K562 (cell line): ENCODE measurements at regions of chr2 and their contacts with region 1.

Region 1: DNA sequence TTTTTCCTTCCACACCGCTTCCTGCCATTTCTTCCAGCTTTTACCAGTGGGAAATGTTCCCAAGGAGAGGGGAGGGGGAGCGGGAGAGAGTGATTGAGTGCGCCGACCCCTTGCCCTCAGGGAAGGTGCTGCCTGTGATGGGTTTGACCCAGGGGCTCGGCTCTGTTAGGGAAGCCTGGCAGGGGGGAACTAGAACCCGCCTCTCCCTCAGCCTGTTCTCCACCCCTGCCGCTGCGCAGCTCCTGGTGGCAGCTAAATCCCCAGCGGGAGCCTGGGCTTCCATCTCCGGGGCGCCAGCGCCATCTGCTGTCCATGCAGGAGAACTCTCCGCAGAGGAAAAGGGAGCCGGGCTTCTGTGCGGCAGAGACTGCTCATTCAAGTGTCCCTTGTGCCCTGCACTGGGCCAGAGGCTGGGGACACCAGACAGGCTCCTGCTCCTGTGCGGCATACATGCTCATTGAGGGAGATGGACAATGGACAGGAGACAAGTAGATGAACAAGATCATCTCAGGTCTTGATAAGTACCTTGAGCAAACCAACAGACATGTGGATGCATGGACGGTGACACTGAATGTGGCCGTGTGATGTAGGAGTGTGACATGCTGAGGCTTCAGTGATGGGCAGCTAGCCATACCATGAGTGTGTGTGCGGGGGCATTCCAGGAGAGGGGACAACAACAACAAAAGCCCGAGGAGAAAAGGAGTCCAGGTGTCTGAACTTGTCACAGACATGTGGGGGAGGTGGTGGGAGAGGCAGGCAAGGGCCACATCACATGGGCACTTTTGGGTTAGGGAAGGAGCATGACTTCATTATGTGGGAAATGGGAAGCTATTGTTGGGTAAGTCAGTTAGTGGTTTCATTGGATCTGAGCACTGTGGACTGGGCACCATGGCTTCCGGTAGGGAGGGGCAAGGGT is 13.3 kb downstream of the CHPF start:
- DNase-seq: peak; percentile 74 to 88 (median 82)
- ATAC-seq: peak; percentile 80
- H3K4me3 ChIP-seq: no peak overlapping the region
- H3K27ac ChIP-seq: no peak overlapping the region
- H3K4me1 ChIP-seq: peaks cover 47 to 61% of the 10 kb centered on the region in 2 experiments
- H3K27me3 ChIP-seq: no peaks in the 10 kb centered on the region
- CTCF ChIP-seq: peak; percentile 91 to 98 (median 97)
- EP300 ChIP-seq: no peak
- POLR2A ChIP-seq: no peak
- RAD21 ChIP-seq: peak; percentile 98 to 99

Region 2: GRCh38 chr2:219402665-219403515 is 127.4 kb before region 1 on chr2:
- CTCF ChIA-PET with region 1: interaction called, 25 read pairs
- POLR2A ChIA-PET with region 1: interaction called, 3 read pairs
- in situ Hi-C with region 1: loop called (anchors 5 kb)
- intact Hi-C with region 1: loop called (anchors 1 kb)
- DNase-seq: peak; percentile 68 to 81 (median 72)
- ATAC-seq: peak; percentile 83
- H3K4me3 ChIP-seq: no peak overlapping the region
- H3K27ac ChIP-seq: no peak overlapping the region
- H3K4me1 ChIP-seq: peaks cover 17 to 18% of the 10 kb centered on the region in 2 experiments
- H3K27me3 ChIP-seq: no peaks in the 10 kb centered on the region
- CTCF ChIP-seq: peak; percentile 85 to 90 (median 89)
- EP300 ChIP-seq: no peak
- POLR2A ChIP-seq: no peak
- RAD21 ChIP-seq: peak; percentile 78 to 87

Region 3: DNA sequence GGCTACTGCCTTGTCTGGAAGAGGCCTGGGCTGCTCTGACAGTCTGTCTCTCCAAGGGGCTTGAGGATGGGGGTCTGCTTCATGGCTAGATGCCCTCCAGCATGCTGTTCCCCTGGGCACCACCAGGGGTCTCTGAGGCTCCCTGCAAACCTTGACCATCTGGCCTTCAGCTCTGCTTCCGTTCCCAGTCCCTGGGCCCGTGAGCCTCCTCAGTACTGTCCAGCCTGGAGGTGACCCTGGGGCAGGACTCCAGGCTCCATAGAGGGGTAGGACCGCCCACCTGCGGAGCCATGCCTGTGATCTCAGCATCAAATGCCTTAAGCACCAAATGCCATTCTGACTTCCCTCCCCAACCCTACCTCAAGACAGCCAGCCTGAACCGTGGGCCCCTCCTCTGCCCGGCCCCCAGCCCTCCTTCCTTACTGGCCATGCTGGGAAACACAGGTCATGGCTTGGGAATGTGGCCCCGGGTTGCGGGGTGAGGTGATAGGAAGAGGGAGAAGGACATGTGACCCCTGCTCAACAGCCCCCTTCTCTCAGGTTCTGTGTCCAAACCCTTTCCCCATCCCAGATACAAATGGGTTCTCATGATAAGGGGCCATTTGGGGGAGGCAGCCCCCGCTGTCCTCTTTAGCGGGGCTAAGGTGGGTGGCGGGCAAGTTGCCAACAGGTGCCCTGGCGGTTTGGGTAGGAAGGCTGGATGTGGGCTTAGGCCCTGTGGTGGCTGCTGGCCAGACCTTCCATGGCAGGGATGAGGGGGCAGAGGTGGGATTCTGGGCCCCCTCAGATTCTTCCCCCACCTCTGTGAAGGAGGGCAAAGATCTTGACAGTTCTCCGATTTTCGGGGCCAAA is 70.6 kb before region 1 on chr2:
- CTCF ChIA-PET with region 1: interaction called, 11 read pairs
- POLR2A ChIA-PET with region 1: interaction called, 4 read pairs
- in situ Hi-C with region 1: no loop called
- intact Hi-C with region 1: loop called (anchors 1 kb)
- DNase-seq: peak; percentile 71 to 83 (median 76)
- ATAC-seq: peak; percentile 92
- H3K4me3 ChIP-seq: no peak overlapping the region
- H3K27ac ChIP-seq: peak overlapping the region; percentile 23; the same call in 1 of the 3 replicates
- H3K4me1 ChIP-seq: peaks cover 20 to 31% of the 10 kb centered on the region in 2 experiments
- H3K27me3 ChIP-seq: no peaks in the 10 kb centered on the region
- CTCF ChIP-seq: peak; percentile 74 to 90 (median 81)
- EP300 ChIP-seq: no peak
- POLR2A ChIP-seq: no peak
- RAD21 ChIP-seq: peak; percentile 11 to 75; a peak in 2 of 4 replicates

Region 4: DNA sequence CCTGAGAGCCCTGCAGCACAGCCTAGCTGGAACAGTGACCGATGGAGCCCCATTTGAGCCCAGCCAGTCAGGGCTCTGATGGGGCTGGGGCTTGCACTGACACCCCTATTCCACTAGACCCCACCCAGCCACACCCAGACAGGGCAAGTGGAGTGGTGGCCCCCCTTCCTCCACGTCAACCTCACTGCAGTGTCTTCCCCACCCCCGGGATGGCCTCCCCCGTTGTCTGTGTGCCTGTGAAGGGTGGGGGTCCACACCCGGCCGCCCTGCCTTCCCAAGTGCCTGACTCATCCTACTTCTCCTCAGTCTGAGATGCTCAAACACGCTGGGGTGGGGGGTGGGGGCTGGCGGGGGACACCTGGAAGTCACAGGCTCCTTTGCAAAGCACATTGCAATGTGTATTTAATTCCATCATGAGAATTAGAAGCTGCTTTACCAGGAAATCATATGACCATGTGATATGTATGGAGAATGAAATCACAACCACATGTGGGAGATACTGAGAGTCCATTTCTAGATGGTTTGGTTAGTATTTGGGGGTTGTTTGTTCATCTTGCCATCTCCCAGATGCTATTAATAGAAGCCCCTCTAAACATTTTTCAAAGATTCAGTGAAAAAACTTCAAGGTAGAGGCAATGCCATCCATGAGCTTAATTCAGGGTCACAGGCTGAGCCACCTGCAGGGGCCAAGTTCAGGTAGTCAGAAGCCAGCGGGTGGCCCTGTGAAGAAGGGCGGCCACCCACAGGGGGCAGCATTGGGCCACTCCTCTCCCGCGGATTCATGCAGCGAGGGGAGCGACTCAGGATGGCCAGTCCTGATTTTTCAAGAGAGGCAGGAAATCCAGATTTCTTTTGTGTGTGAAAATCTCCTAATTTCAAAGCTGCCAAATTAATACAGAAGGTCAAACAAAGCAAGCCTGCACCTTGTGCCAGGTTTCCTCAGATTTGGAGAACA is 54.3 kb before region 1 on chr2:
- CTCF ChIA-PET with region 1: interaction called, 20 read pairs
- POLR2A ChIA-PET with region 1: interaction called, 4 read pairs
- in situ Hi-C with region 1: loop called (anchors 10 kb)
- intact Hi-C with region 1: loop called (anchors 1 kb)
- DNase-seq: peak; percentile 77 to 85 (median 83)
- ATAC-seq: peak; percentile 93
- H3K4me3 ChIP-seq: no peak overlapping the region
- H3K27ac ChIP-seq: no peak overlapping the region
- H3K4me1 ChIP-seq: peaks cover 7 to 56% of the 10 kb centered on the region in 2 experiments; a peak in 4 of 5 replicates
- H3K27me3 ChIP-seq: no peaks in the 10 kb centered on the region
- CTCF ChIP-seq: peak; percentile 81 to 92 (median 87)
- EP300 ChIP-seq: no peak
- POLR2A ChIP-seq: no peak
- RAD21 ChIP-seq: peak; percentile 85 to 86

Region 5: GRCh38 chr2:219490186-219490585 is 40.1 kb before region 1 on chr2:
- CTCF ChIA-PET with region 1: interaction called, 9 read pairs
- POLR2A ChIA-PET with region 1: interaction called, 3 read pairs
- in situ Hi-C with region 1: loop called (anchors 5 kb)
- intact Hi-C with region 1: loop called (anchors 2 kb)
- DNase-seq: peak in 2 of 4 experiments; percentile 24 to 41
- ATAC-seq: peak; percentile 65
- H3K4me3 ChIP-seq: no peak overlapping the region
- H3K27ac ChIP-seq: no peak overlapping the region
- H3K4me1 ChIP-seq: peaks cover 11 to 46% of the 10 kb centered on the region in 2 experiments
- H3K27me3 ChIP-seq: no peaks in the 10 kb centered on the region
- CTCF ChIP-seq: peak in 2 of 3 experiments; percentile 24 to 39; a peak in 1 of 6 replicates
- EP300 ChIP-seq: no peak
- POLR2A ChIP-seq: no peak
- RAD21 ChIP-seq: no peak

Region 6: DNA sequence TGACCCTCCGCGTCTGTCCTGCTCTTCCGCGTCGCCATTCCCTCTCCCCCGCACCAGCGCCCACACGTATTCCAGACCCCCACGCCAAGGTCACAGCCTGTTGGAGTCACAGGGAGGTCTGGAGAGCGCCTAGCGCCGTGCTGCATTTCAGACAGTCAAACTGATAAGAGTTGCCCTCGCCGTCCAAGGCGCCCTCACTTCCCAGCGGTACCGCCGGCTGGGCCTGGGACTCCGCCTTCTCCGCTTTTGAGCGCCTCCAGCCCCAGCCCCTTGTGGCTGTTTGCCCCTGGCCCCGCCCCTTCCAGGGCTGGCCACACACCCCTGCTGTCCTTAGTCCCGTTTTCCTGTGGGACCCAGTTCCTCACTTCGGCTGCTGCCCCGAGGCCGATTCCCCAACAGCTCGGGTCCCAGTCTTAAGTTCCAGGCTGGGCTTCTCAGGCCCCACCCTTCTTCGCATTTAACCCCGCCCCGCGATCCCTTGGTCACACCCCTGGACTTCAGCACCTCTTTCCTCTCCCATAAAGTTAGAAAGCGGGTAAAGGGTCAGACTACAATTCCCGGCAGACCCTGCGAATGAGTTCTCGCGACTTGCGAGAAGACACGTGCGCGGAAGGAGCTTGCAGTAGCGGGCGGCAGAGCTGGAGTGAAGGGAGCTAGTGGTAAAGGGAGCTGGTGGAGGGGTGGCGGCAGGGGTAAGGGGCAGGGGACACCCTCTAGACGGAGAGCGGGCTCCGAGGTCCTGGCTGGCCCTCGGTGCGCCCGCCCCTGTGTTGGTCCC is 31.8 kb before region 1 on chr2 and contains the start of gene GMPPA:
- CTCF ChIA-PET with region 1: interaction called, 9 read pairs
- POLR2A ChIA-PET with region 1: interaction called, 4 read pairs
- in situ Hi-C with region 1: loop called (anchors 5 kb)
- intact Hi-C with region 1: loop called (anchors 1 kb)
- DNase-seq: peak; percentile 74 to 95 (median 85)
- ATAC-seq: peak; percentile 85
- H3K4me3 ChIP-seq: peak within 1 kb of the TSS; percentile 64
- H3K27ac ChIP-seq: peak within 1 kb of the TSS; percentile 95
- H3K4me1 ChIP-seq: peaks cover 47 to 60% of the 10 kb centered on the region in 2 experiments
- H3K27me3 ChIP-seq: no peaks in the 10 kb centered on the region
- CTCF ChIP-seq: no peak
- EP300 ChIP-seq: no peak; the same call in 1 of the 2 replicates
- POLR2A ChIP-seq: peak; percentile 80
- RAD21 ChIP-seq: no peak; a peak in 1 of 4 replicates
- polyA plus RNA-seq, gene GMPPA: 7.0 to 24.7 TPM

Region 7: DNA sequence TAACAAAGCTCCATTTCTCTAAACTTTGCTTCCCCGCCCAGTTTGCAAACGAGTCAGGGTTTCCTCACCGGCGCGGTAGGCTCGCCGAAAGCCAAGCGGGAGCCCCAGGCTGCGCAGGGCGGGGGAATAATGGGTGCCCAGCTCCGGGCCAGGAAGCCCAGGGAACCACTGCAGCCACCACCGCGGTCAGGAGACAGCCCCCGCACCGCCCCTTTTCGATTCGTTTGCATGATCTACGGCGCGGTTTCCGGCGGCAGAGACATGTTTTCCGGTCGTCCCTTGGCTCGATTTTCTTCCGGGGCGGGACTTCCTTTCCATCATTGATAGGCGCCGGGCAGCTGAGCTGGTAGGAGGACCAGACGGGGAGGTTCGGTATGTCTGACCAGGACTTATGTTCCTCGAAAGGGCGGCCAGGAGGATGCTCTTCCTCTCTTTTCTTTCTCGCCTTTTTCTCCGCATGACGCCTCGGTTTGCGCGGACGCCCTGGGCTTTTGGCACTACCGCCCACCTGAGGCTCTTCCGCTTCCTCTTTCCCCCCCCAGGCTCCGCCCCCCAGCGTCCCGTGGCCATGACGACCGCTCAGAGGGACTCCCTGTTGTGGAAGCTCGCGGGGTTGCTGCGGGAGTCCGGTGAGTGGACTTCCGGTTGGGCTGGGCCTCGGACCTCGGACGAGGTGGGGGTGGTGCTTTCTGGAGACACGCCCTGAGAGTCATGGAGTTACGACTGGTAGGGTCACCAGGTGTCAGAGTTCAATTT is 67.4 kb after region 1 on chr2 and contains the start of gene STK11IP:
- CTCF ChIA-PET with region 1: no interaction called
- POLR2A ChIA-PET with region 1: no interaction called
- in situ Hi-C with region 1: no loop called
- intact Hi-C with region 1: no loop called
- DNase-seq: peak; percentile 95 to 97 (median 96)
- ATAC-seq: peak; percentile 94
- H3K4me3 ChIP-seq: peak within 1 kb of the TSS; percentile 53
- H3K27ac ChIP-seq: peak within 1 kb of the TSS; percentile 90
- H3K4me1 ChIP-seq: peaks cover 9 to 20% of the 10 kb centered on the region in 2 experiments
- H3K27me3 ChIP-seq: no peaks in the 10 kb centered on the region
- CTCF ChIP-seq: 0 out of 6 replicates have a peak, but pooled peaks of 1 of the 3 experiments have one; percentile 3
- EP300 ChIP-seq: no peak; the same call in 1 of the 2 replicates
- POLR2A ChIP-seq: peak; percentile 90
- RAD21 ChIP-seq: no peak
- polyA plus RNA-seq, gene STK11IP: 0.52 to 0.89 TPM